ENCODE measurements at regions of chr4 and their contacts with region 1.

Region 1: DNA sequence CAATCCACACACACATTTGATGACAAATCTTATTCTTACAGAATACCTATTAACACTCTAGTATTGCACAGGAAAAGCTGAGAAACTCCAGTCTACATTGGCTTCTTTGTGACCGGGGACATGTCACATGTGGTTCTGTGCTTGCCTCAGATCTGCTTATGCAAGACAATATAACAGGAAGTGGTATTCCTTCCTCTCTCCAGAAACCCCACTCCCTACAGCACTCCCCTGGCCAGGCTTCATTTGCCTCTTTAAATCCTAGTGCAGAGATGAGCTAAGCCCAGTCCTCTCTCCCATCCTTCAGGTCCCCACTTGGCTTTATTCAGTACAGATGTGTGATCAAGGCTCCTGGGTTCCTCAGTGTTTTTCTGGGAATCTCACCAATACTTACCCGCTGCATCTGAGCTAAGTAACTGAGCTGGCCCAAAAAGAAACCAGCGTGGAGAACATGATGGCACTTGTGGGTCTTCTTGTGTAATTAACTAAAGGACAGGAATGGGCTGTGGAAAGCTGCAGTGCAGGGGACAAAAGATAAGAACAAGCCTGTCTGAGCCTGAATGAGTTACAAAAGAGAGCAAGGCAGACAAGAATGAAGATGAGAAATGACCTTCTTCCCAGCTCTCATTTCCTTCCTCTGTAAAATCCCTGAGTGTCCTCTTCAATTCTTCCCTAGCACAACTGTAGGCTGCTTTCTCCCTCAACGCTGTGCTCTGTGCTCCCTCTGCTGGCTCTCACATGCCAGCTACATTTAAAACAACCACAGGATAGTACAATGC is 105.6 kb downstream of the HNRNPD start:
- DNase-seq: peak; percentile 6 to 61 (median 32)
- H3K4me3 ChIP-seq: no peak overlapping the region
- H3K4me3 Mint-ChIP-seq: no peak overlapping the region
- H3K27ac ChIP-seq: no peak overlapping the region
- H3K27ac Mint-ChIP-seq: peak overlapping the region in 2 of 8 donors; percentile 18 to 72
- H3K4me1 ChIP-seq: peaks cover 8% of the 10 kb centered on the region
- H3K4me1 Mint-ChIP-seq: peaks cover 6 to 33% (median 10%) of the 10 kb centered on the region in 3 donors
- H3K27me3 ChIP-seq: no peaks in the 10 kb centered on the region
- H3K27me3 Mint-ChIP-seq: peaks cover 5 to 18% of the 10 kb centered on the region in 2 donors

Region 2: DNA sequence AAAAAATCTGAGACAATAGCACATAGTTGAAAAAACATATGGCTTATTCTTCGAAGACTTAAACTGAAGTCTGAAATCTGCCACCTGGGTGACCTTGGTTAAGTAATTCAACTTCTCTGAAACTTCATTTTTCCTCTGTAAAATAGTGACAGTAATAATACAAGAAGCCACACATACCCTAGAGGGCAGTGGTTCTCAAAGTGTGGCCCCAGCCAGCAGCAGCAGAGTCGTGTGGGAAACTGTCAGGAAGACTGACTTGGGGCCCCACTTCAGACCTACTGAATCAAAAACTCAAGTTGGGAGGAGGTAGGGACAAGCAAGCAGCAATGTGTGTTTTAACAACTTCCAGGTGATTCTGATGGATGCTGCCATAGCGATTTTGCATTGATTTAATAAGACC is 144.3 kb before region 1 on chr4:
- CTCF ChIA-PET with region 1: interaction called, 10 read pairs
- POLR2A ChIA-PET with region 1: no interaction called
- DNase-seq: peak in 2 of 5 donors; percentile 21 to 50
- H3K4me3 ChIP-seq: no peak overlapping the region
- H3K4me3 Mint-ChIP-seq: no peak overlapping the region
- H3K27ac ChIP-seq: no peak overlapping the region
- H3K27ac Mint-ChIP-seq: peak overlapping the region in 2 of 8 donors; percentile 21 to 48
- H3K4me1 ChIP-seq: no peaks in the 10 kb centered on the region
- H3K4me1 Mint-ChIP-seq: peaks cover 0 to 8% (median 5%) of the 10 kb centered on the region in 3 donors
- H3K27me3 ChIP-seq: no peaks in the 10 kb centered on the region
- H3K27me3 Mint-ChIP-seq: peaks cover 0 to 2% of the 10 kb centered on the region in 2 donors

Region 3: GRCh38 chr4:82360298-82361177 is 92.3 kb after region 1 on chr4:
- CTCF ChIA-PET with region 1: interaction called, 14 read pairs
- POLR2A ChIA-PET with region 1: no interaction called
- DNase-seq: peak in 2 of 5 donors; percentile 26 to 27
- H3K4me3 ChIP-seq: no peak overlapping the region
- H3K4me3 Mint-ChIP-seq: peak overlapping the region in 2 of 7 donors; percentile 24 to 28
- H3K27ac ChIP-seq: no peak overlapping the region
- H3K27ac Mint-ChIP-seq: peak overlapping the region; percentile 28 to 91 (median 50)
- H3K4me1 ChIP-seq: peaks cover 95% of the 10 kb centered on the region
- H3K4me1 Mint-ChIP-seq: peaks cover 85 to 98% (median 97%) of the 10 kb centered on the region in 3 donors
- H3K27me3 ChIP-seq: no peaks in the 10 kb centered on the region
- H3K27me3 Mint-ChIP-seq: peaks cover 0 to 1% of the 10 kb centered on the region in 2 donors

Region 4: DNA sequence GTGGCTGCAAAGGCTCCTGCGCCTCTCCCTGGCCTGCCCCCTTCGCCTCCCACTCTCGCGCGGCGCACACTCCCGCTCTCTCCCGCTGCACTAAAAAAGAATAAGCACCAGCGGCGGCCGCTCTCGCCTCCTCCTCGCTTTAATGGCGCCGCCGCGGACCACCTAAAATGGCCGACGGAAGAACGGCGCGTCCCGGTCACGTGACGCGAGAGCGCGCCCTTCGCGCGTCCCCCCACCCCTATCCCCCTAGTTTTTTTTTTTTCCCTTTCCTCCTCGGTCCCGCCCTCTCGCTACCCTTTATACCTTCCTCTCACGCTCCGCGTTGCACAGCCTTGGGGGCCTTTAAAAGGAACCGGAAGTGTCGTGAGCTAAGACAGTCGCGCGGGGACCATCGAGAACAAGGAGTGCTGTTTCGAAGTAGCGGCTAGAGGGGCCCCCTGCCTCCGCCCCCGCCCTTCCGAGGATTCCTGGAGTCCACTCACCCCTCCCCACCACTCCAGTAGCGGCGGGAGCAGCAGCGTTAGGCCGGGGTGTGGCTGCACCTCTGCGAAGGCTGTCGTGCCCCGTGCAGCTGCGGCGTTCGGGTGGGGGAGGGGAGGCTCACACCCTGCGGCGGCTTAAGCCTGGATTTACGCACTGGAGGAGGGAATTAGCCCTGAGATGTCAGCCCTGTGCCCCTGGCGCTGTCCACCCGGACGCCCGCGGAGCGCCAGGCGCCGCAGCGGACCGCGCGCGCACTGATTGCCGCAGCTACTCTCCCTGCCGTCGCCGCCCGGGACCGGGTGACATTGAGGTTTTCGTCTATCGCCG is 105.8 kb after region 1 on chr4 and contains the start of gene HNRNPD:
- CTCF ChIA-PET with region 1: interaction called, 3 read pairs
- POLR2A ChIA-PET with region 1: interaction called, 12 read pairs
- DNase-seq: peak; percentile 82 to 96 (median 93)
- H3K4me3 ChIP-seq: peak within 1 kb of the TSS; percentile 78
- H3K4me3 Mint-ChIP-seq: peak within 1 kb of the TSS; percentile 94 to 99 (median 98)
- H3K27ac ChIP-seq: peak within 1 kb of the TSS; percentile 92
- H3K27ac Mint-ChIP-seq: peak within 1 kb of the TSS; percentile 96 to 100 (median 99)
- H3K4me1 ChIP-seq: peaks cover 46% of the 10 kb centered on the region
- H3K4me1 Mint-ChIP-seq: peaks cover 44 to 62% (median 59%) of the 10 kb centered on the region in 3 donors
- H3K27me3 ChIP-seq: no peaks in the 10 kb centered on the region
- H3K27me3 Mint-ChIP-seq: peaks cover 0 to 11% of the 10 kb centered on the region in 2 donors
- total RNA-seq, gene HNRNPD: 452 to 475 TPM